ENCODE measurements at regions of chr2 and their contacts with region 1.

Region 1: DNA sequence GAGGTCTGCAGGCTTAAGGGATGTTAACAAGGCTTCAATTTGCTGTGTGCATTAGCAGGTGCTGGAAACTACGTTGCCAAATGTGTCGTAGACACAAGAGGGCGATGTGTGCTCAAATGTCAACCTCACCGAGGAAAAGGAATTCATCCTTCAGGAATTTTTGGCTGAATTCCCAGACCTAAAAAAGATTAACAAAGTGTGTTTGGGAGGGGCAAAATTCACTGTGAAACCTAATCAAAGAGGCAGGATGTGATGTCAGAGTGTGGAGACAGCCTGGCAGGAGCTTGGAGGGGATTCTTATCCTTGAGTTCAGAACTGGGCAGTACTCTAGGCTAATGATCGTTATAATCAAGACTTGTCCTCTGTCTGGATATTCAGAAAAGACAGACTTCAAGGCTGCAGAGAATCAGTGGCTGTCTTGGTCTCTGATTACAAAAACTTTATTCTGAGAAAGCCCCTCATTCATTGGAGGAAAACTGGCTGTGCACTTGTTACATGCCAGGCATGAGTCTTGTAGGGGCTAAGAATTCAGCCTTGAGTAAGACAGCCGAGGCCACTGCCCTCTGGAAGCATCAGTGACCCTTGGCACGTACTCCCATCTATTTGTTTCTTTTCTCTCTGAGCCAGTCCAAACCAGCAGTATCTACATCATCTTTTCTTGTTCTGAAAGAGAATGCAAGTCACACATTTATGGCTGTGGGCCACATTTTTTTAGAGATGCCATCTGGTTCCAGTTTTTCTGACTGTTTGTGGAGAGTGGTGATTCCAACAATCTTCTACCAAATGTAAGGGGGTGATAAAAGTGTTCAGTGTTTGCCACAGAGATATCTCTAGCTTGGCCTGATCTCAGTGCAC is 18.7 kb upstream of the SCYGR1 start:
- DNase-seq: peak; percentile 53
- H3K4me3 Mint-ChIP-seq: no peak overlapping the region
- H3K27ac Mint-ChIP-seq: peak overlapping the region; percentile 43
- H3K4me1 Mint-ChIP-seq: peaks cover 71% of the 10 kb centered on the region
- H3K27me3 Mint-ChIP-seq: no peaks in the 10 kb centered on the region

Region 2: DNA sequence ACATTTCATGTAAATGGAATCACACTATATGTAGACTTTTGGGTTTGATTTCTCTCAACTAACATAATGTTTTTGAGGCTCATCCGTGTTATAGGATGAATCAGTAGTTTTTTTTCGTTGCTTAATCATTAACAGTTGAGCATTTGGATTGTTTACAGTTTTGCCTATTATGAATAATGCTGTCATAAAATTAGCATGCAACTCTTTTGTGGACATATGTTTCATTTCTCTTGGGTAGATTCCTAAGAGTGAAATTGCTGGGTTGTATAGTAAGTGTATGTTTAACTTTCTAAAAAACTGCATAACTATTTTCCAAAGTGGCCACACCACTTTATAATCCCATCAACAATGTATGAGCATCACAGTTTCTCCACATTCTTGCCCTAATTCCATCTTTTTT is 578.2 kb before region 1 on chr2:
- CTCF ChIA-PET with region 1: no interaction called
- intact Hi-C with region 1: no loop called
- DNase-seq: no peak
- H3K4me3 Mint-ChIP-seq: no peak overlapping the region
- H3K27ac Mint-ChIP-seq: no peak overlapping the region
- H3K4me1 Mint-ChIP-seq: peaks cover 29% of the 10 kb centered on the region
- H3K27me3 Mint-ChIP-seq: no peaks in the 10 kb centered on the region

Region 3: GRCh38 chr2:227214622-227215041 is 191.8 kb before region 1 on chr2:
- CTCF ChIA-PET with region 1: no interaction called
- intact Hi-C with region 1: no loop called
- DNase-seq: no peak
- H3K4me3 Mint-ChIP-seq: no peak overlapping the region
- H3K27ac Mint-ChIP-seq: no peak overlapping the region
- H3K4me1 Mint-ChIP-seq: no peaks in the 10 kb centered on the region
- H3K27me3 Mint-ChIP-seq: peaks cover 3% of the 10 kb centered on the region

Region 4: DNA sequence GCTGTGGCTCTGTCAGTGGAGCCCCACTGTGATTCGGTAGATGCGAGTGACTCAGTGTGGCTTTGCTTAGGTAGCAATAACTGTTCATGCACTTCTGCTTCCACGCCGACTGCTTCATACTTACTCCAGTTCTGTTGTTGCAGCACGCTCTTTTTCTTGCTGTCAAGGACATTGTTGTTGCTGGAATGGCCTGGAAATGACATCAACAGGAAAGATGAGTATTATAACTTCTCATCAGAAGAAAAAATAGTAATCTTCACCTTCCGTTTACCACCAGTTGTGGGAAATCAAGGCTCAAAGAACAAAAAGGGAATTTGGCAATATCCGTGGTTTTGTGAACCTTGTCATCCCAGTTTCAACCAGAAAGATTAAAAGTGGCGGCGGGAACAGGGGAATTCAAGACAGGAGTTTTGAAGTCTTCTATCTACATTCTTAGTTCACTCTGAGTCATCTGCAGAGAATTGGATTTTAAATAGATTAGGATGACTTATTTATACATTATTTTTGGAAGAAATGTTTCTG is 35.6 kb before region 1 on chr2:
- CTCF ChIA-PET with region 1: no interaction called
- intact Hi-C with region 1: loop called (anchors 1 kb)
- DNase-seq: peak; percentile 44
- H3K4me3 Mint-ChIP-seq: no peak overlapping the region
- H3K27ac Mint-ChIP-seq: peak overlapping the region; percentile 22
- H3K4me1 Mint-ChIP-seq: peaks cover 25% of the 10 kb centered on the region
- H3K27me3 Mint-ChIP-seq: no peaks in the 10 kb centered on the region

Region 5: DNA sequence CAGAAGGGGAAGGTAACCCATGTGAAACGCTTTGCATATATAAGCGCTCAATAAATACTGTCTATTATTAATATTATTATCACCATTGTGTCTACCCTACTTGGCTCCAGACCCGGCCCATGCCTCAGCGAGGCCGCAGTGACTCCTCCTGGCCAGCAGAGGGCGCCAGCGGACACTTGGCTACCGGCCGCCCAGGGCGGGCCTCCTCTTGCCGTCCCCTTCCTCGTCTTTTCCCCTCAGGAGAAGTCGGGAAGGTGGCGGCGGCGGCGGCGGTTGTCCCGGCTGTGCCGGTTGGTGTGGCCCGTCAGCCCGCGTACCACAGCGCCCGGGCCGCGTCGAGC is 65.5 kb after region 1 on chr2 and contains the start of gene AGFG1:
- CTCF ChIA-PET with region 1: interaction called, 95 read pairs
- intact Hi-C with region 1: loop called (anchors 2 kb)
- DNase-seq: peak; percentile 89
- H3K4me3 Mint-ChIP-seq: peak within 1 kb of the TSS; percentile 93
- H3K27ac Mint-ChIP-seq: peak within 1 kb of the TSS; percentile 93
- H3K4me1 Mint-ChIP-seq: peaks cover 53% of the 10 kb centered on the region
- H3K27me3 Mint-ChIP-seq: no peaks in the 10 kb centered on the region
- total RNA-seq, gene AGFG1: 153 to 157 TPM

Region 6: DNA sequence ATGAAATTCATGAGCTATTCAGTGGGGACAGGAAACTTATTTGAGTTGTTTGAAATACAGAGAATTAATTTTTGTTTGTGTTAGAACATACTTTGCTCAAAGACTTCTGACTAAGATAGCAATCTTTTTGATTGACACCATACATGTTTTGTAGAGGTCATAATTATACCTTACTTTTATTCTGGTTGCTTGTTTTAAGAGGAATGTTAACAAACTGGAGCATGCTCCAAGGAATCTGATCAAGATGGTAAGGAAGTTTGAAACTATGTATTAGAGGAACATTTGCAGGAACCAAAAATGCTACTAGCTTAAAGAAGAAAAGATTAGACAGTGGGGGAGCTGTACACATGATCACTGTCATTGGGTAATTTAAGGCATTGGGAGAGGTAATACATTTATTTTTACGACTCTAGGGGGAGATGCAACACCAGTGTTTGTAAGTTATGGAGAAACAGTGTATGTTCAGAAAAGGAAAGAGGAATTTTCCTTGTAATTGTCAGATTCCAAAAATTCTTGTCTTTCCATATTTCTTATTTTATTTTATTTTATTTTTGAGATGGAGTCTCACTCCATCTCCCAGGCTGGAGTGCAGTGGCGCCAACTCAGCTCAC is 73.6 kb after region 1 on chr2:
- CTCF ChIA-PET with region 1: interaction called, 15 read pairs
- intact Hi-C with region 1: no loop called
- DNase-seq: no peak
- H3K4me3 Mint-ChIP-seq: peak overlapping the region; percentile 17
- H3K27ac Mint-ChIP-seq: peak overlapping the region; percentile 82
- H3K4me1 Mint-ChIP-seq: peaks cover 81% of the 10 kb centered on the region
- H3K27me3 Mint-ChIP-seq: no peaks in the 10 kb centered on the region

Region 7: DNA sequence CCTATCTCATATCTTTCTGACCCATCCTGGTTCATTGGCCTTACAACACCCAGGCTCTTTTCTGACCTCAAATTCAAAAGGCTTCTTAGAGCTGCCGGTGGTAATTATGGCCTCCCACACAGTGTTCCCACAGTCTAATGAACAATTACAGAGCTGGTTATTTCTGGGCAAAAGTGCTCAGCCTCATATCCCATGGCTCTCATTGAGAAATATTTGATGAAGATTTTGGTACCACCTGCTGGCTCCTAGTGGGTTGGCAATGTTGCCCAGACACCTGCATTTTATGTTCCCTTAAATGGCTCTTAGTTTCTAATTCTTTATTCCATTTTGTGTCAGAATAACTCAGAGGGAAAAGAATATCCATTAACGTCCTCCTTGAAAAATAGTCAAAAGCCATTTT is 172.2 kb after region 1 on chr2:
- CTCF ChIA-PET with region 1: interaction called, 3 read pairs
- intact Hi-C with region 1: loop called (anchors 1 kb)
- DNase-seq: peak; percentile 22
- H3K4me3 Mint-ChIP-seq: no peak overlapping the region
- H3K27ac Mint-ChIP-seq: no peak overlapping the region
- H3K4me1 Mint-ChIP-seq: no peaks in the 10 kb centered on the region
- H3K27me3 Mint-ChIP-seq: peaks cover 25% of the 10 kb centered on the region

Region 8: DNA sequence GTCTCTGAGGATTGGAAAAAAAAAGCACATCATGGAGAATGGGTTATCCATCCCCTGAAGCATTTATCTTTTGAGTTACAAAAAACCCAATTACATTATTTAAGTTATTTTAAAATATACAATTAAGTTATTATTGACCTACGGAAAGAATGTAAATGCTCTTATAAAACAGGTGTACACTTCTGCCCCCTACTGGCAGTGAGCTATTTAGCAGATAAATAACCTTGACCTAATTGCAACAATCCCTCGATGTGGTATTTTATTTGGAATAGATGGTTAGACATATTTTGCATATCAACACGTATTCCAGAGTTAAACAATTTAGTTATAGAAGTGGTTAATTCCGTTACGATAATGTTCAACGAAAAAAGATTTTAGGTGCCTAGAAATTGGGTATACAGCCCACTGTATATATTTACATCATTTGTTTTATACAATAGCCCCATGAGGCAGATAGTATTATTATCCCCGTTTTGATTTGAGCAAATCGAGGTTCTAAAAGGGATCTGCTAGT is 455.9 kb after region 1 on chr2:
- CTCF ChIA-PET with region 1: interaction called, 3 read pairs
- intact Hi-C with region 1: loop called (anchors 5 kb)
- DNase-seq: peak; percentile 54
- H3K4me3 Mint-ChIP-seq: no peak overlapping the region
- H3K27ac Mint-ChIP-seq: no peak overlapping the region
- H3K4me1 Mint-ChIP-seq: peaks cover 2% of the 10 kb centered on the region
- H3K27me3 Mint-ChIP-seq: no peaks in the 10 kb centered on the region

Measured in activated naive CD4-positive, alpha-beta T cell treated with anti-CD3 and anti-CD28 coated beads for 36 hours (primary cell).